Naive thymus-derived CD4-positive, alpha-beta T cell (primary cell): ENCODE measurements at regions of chr21 and their contacts with region 1.

Region 1: DNA sequence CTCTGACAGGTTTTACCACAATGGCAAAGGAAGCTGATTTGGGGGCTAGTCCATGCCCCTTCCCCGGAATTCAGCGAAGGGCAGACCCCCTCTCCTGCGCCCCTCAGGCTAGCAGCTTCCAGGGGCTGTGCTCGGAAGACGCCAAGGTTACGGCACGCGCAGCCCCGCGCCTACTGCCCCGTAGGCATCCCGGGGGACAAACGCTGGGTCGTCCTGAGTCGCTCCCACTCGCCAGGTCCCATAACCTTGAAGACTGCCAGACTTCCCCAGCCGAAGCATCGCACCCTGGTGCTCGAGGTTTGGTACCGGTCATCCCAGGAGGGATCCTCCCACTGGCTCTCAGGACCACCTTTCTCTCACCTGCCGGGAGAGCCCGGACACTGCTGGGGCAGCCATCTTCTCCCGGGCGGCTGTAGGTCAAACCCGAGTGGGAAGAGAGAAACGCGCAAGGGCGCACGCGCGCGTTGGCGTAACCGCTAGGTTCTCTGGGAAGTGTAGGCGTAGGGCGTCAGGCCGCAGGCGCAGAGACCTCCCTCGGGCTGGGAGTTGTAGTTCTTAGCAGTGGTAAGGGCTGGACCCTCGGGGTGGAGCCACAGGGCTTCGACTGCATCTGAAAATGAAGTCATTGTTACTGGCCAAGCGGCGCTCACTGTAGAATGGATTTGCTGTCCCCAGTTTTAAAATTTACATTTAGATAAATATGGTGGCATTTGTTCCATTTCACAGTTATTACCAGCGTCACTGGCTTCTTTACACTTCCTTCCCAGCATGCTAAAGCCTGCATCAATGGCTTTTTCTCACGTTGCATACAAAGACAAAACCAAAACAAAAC is at the start of gene ATP5PO:
- DNase-seq: peak; percentile 87 to 96 (median 93)
- ATAC-seq: peak; percentile 100
- H3K4me3 ChIP-seq: peak within 1 kb of the TSS; percentile 92
- H3K4me3 Mint-ChIP-seq: peak within 1 kb of the TSS; percentile 93 to 99 (median 98)
- H3K27ac ChIP-seq: peak within 1 kb of the TSS; percentile 92
- H3K27ac Mint-ChIP-seq: peak within 1 kb of the TSS; percentile 87 to 98 (median 97)
- H3K4me1 ChIP-seq: peaks cover 11 to 12% of the 10 kb centered on the region in 2 donors
- H3K4me1 Mint-ChIP-seq: peaks cover 14 to 40% (median 35%) of the 10 kb centered on the region in 7 donors
- H3K27me3 ChIP-seq: no peaks in the 10 kb centered on the region
- H3K27me3 Mint-ChIP-seq: no peaks in the 10 kb centered on the region
- total RNA-seq, gene ATP5PO: 123 to 185 (median 157) TPM

Region 2: GRCh38 chr21:33721081-33721480 is 194.5 kb before region 1 on chr21:
- CTCF ChIA-PET with region 1: no interaction called
- POLR2A ChIA-PET with region 1: no interaction called
- intact Hi-C with region 1: no loop called
- DNase-seq: no peak
- ATAC-seq: no peak
- H3K4me3 ChIP-seq: no peak overlapping the region
- H3K4me3 Mint-ChIP-seq: no peak overlapping the region
- H3K27ac ChIP-seq: no peak overlapping the region
- H3K27ac Mint-ChIP-seq: no peak overlapping the region
- H3K4me1 ChIP-seq: no peaks in the 10 kb centered on the region
- H3K4me1 Mint-ChIP-seq: no peaks in the 10 kb centered on the region
- H3K27me3 ChIP-seq: no peaks in the 10 kb centered on the region
- H3K27me3 Mint-ChIP-seq: no peaks in the 10 kb centered on the region

Region 3: DNA sequence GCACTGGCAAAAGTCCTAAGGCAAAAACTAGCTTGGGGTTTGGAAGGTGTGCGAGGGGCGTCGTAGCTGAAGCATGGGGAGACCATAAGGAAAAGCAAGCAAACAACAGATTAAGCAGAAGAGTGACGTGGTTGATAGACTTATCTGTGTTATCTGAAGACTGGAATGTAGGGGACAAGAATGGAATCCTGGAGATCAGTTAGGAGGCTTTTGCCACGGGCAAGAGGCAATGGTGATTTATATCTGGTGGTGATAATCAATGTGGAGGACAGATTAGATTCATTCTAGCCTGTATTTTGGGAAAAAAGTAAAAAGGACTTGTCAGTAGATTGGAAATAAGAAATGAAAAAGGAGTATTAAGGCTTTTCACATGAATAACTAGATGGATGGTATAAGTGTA is 175.9 kb before region 1 on chr21:
- CTCF ChIA-PET with region 1: no interaction called
- POLR2A ChIA-PET with region 1: no interaction called
- intact Hi-C with region 1: no loop called
- DNase-seq: no peak
- ATAC-seq: no peak
- H3K4me3 ChIP-seq: no peak overlapping the region
- H3K4me3 Mint-ChIP-seq: no peak overlapping the region
- H3K27ac ChIP-seq: no peak overlapping the region
- H3K27ac Mint-ChIP-seq: no peak overlapping the region
- H3K4me1 ChIP-seq: no peaks in the 10 kb centered on the region
- H3K4me1 Mint-ChIP-seq: peaks cover 0 to 1% (median 0%) of the 10 kb centered on the region in 7 donors
- H3K27me3 ChIP-seq: no peaks in the 10 kb centered on the region
- H3K27me3 Mint-ChIP-seq: peaks cover 0 to 2% (median 0%) of the 10 kb centered on the region in 5 donors

Region 4: GRCh38 chr21:33894736-33895288 is 20.8 kb before region 1 on chr21:
- CTCF ChIA-PET with region 1: interaction called, 4 read pairs
- POLR2A ChIA-PET with region 1: no interaction called
- intact Hi-C with region 1: loop called in 1 of 2 experiments (anchors 2 kb)
- DNase-seq: peak; percentile 23 to 74 (median 67)
- ATAC-seq: peak; percentile 97
- H3K4me3 ChIP-seq: peak overlapping the region; percentile 36
- H3K4me3 Mint-ChIP-seq: peak overlapping the region; percentile 64 to 90 (median 78)
- H3K27ac ChIP-seq: peak overlapping the region; percentile 23
- H3K27ac Mint-ChIP-seq: peak overlapping the region in 8 of 9 donors; percentile 33 to 90 (median 74)
- H3K4me1 ChIP-seq: no peaks in the 10 kb centered on the region
- H3K4me1 Mint-ChIP-seq: peaks cover 8 to 16% (median 15%) of the 10 kb centered on the region in 7 donors
- H3K27me3 ChIP-seq: no peaks in the 10 kb centered on the region
- H3K27me3 Mint-ChIP-seq: peaks cover 0 to 26% (median 0%) of the 10 kb centered on the region in 5 donors

Region 5: DNA sequence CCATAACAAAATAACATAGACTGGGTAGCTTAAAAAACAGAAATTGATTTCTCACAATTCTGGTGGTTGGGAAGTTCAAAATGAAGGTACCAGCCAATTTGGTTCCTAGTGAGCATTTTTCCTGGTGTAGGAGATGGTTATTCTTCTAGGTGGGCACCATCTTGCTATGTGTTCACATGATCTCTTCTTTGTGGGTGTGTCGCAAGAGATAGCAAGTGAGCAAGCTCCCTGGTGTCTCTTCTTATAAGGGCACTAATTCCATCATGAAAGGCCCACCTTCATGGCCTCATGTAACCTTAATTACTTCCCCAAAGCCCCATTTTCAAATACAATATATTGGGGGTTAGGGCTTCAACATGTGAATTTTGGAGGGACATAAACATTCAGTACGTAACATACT is 38.8 kb after region 1 on chr21:
- CTCF ChIA-PET with region 1: no interaction called
- POLR2A ChIA-PET with region 1: no interaction called
- intact Hi-C with region 1: no loop called
- DNase-seq: no peak
- ATAC-seq: no peak
- H3K4me3 ChIP-seq: no peak overlapping the region
- H3K4me3 Mint-ChIP-seq: no peak overlapping the region
- H3K27ac ChIP-seq: no peak overlapping the region
- H3K27ac Mint-ChIP-seq: peak overlapping the region in 4 of 9 donors; percentile 28 to 99 (median 44)
- H3K4me1 ChIP-seq: peaks cover 33 to 44% of the 10 kb centered on the region in 2 donors
- H3K4me1 Mint-ChIP-seq: peaks cover 36 to 84% (median 55%) of the 10 kb centered on the region in 7 donors
- H3K27me3 ChIP-seq: no peaks in the 10 kb centered on the region
- H3K27me3 Mint-ChIP-seq: no peaks in the 10 kb centered on the region

Region 6: GRCh38 chr21:34351786-34352241 is 436.2 kb after region 1 on chr21:
- CTCF ChIA-PET with region 1: interaction called, 5 read pairs
- POLR2A ChIA-PET with region 1: interaction called, 4 read pairs
- intact Hi-C with region 1: loop called in 1 of 2 experiments (anchors 2 kb)
- DNase-seq: peak in 2 of 9 donors; percentile 16 to 23
- ATAC-seq: peak; percentile 69
- H3K4me3 ChIP-seq: no peak overlapping the region
- H3K4me3 Mint-ChIP-seq: no peak overlapping the region
- H3K27ac ChIP-seq: no peak overlapping the region
- H3K27ac Mint-ChIP-seq: no peak overlapping the region
- H3K4me1 ChIP-seq: no peaks in the 10 kb centered on the region
- H3K4me1 Mint-ChIP-seq: peaks cover 0 to 11% (median 8%) of the 10 kb centered on the region in 7 donors
- H3K27me3 ChIP-seq: no peaks in the 10 kb centered on the region
- H3K27me3 Mint-ChIP-seq: peaks cover 10 to 25% (median 22%) of the 10 kb centered on the region in 5 donors

Region 7: DNA sequence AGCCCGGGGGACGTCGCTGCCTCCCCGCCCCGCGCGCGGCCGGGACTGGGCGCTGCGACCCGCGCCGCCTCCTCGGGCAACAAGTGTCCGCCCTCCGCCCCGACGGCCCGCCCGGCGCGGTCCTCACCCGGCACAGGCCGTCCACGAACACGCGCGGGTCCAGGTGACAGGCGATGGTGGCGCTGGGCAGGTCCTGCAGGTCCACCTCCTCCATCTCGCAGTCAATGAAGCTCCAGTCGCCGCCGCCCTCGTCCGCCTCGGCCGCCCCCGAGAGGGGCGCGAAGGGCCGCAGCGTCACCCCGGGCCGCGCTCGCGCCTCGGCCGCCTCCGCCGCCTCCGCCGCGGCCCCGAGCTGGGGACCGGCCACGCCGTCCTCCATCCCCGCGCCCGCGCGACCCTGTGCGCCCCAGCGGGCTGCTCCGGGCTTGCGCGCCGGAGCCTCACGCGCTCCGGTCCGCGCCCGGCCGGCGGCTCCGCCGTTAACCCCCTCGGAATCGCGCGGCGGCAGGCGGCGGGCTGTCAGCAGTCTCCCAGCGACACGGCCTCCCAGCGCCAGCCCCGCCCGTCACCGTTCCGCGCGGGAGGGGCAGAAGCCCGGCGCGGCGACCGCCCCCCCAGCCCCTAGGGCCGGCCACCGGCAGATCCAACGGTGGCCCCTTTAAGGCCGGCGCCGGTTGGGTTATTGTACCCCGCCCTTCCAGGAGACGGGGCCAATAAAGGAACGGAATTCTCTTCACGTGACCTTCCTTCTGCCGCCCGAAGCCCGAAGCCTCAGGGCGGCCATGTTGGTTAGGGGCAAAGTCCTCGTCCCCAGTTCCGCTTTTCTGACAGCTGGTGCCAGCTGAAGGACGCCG is 699.3 kb after region 1 on chr21 and contains the start of gene RCAN1:
- CTCF ChIA-PET with region 1: no interaction called
- POLR2A ChIA-PET with region 1: no interaction called
- intact Hi-C with region 1: loop called (anchors 1 kb)
- DNase-seq: peak; percentile 70 to 87 (median 85)
- ATAC-seq: peak; percentile 99
- H3K4me3 ChIP-seq: peak within 1 kb of the TSS; percentile 67
- H3K4me3 Mint-ChIP-seq: peak within 1 kb of the TSS; percentile 83 to 96 (median 93)
- H3K27ac ChIP-seq: peak within 1 kb of the TSS; percentile 57
- H3K27ac Mint-ChIP-seq: peak within 1 kb of the TSS; percentile 82 to 95 (median 83)
- H3K4me1 ChIP-seq: peaks cover 4 to 12% of the 10 kb centered on the region in 2 donors
- H3K4me1 Mint-ChIP-seq: peaks cover 15 to 25% (median 20%) of the 10 kb centered on the region in 7 donors
- H3K27me3 ChIP-seq: no peaks in the 10 kb centered on the region
- H3K27me3 Mint-ChIP-seq: peaks cover 0 to 32% (median 0%) of the 10 kb centered on the region in 5 donors
- total RNA-seq, gene RCAN1: 3.0 to 8.1 (median 4.9) TPM

Region 8: DNA sequence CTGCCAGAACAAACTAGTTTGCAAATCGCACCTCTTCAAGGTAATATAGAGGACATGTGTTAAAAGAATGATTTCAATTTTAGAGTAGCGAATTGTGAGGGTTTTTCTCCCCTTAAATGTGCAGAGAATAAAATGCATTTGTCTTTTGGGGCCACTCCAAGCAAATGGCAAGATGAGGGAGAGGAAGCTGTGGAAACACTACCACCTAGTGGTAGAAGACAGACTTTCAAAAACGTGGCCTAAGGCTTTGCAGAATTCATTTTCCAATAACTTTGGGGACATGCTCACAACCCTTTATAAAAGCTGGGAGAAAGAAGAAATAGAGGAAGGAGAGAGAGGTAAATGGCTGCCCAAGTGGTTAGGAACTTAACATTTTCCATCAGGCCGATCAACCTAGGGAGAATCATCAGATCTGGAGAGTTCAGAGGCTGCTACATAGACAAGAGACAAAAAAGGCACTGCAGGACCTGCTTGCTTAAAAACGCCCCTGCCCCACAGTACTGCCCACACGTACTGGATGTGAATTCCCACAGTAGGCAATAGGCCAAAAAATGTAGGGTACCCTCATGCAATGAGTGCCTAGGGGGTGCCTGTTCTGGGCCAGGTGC is 715.1 kb after region 1 on chr21:
- CTCF ChIA-PET with region 1: no interaction called
- POLR2A ChIA-PET with region 1: no interaction called
- intact Hi-C with region 1: loop called in 1 of 2 experiments (anchors 5 kb)
- DNase-seq: peak in 7 of 9 donors; percentile 23 to 65 (median 52)
- ATAC-seq: peak; percentile 77
- H3K4me3 ChIP-seq: no peak overlapping the region
- H3K4me3 Mint-ChIP-seq: no peak overlapping the region
- H3K27ac ChIP-seq: no peak overlapping the region
- H3K27ac Mint-ChIP-seq: no peak overlapping the region
- H3K4me1 ChIP-seq: no peaks in the 10 kb centered on the region
- H3K4me1 Mint-ChIP-seq: no peaks in the 10 kb centered on the region
- H3K27me3 ChIP-seq: no peaks in the 10 kb centered on the region
- H3K27me3 Mint-ChIP-seq: peaks cover 5 to 22% (median 14%) of the 10 kb centered on the region in 5 donors